ENCODE measurements at regions of chr7 and their contacts with region 1.

Region 1: GRCh38 chr7:47571331-47572093 is 10.4 kb downstream of the TNS3 start:
- DNase-seq: peak in 1 of 2 donors; percentile 91
- H3K4me3 ChIP-seq: peak overlapping the region; percentile 23 to 55
- H3K27ac ChIP-seq: peak overlapping the region; percentile 85 to 86
- H3K4me1 ChIP-seq: peaks cover 27 to 56% of the 10 kb centered on the region in 2 donors
- H3K27me3 ChIP-seq: no peaks in the 10 kb centered on the region
- CTCF ChIP-seq: no peak

Region 2: DNA sequence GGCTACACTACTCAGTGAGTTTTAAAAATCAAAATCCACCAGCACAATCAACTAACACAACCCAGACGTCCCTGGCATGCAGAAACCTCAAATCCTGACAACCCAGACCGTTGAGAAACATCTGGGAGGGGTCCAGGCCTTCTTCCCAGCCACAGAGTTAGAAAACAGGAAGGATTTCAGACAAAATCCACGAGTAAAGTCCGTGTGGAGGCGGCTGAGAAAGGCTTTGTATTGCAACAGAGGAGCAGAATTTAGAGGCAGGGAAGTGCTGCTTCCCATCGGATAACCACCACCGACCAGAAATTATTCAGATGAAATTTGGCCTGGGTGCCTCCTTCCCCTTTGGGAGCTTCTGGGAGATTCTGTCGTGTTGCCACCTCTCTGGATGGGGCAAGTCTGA is 51.1 kb before region 1 on chr7:
- intact Hi-C with region 1: loop called (anchors 5 kb)
- DNase-seq: peak in 1 of 2 donors; percentile 88
- H3K4me3 ChIP-seq: no peak overlapping the region
- H3K27ac ChIP-seq: peak overlapping the region; percentile 76 to 88
- H3K4me1 ChIP-seq: peaks cover 8 to 39% of the 10 kb centered on the region in 2 donors
- H3K27me3 ChIP-seq: no peaks in the 10 kb centered on the region
- CTCF ChIP-seq: no peak

Region 3: DNA sequence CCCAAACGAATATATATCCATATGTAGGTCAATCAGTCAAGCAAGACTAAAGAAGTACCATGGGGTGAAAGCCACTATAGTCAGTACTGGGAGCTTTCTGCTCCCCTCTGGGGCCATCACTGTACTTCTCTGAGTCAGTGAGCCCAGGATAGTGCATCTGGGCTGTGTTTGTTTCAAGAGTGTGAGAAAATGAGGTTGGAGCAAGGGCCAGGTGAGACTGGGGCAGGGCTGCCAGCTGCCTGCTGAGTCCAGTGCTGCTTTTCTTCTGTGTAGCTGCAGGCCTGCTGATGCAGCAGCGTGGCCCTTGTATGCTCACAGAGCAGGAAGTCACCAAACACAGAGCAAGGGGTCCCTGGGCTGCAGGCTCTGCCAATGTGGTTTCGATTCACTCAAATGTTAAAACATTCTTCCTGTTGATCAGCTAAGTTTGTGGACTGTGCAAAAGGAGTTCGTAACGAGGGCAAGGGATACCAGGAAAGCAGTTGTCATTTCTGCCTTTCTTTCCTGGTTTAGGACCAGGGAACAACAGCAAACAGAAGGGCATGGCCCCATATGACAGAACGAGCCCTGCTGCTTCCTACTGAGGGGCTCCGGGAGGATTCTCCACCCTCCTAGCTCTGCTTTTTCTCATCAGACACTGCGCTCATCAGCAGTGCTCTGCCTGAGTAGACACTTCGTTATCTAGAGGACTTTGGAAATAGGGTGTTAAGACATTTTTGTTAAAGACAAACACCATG is 75.8 kb after region 1 on chr7:
- intact Hi-C with region 1: no loop called
- DNase-seq: no peak
- H3K4me3 ChIP-seq: no peak overlapping the region
- H3K27ac ChIP-seq: no peak overlapping the region
- H3K4me1 ChIP-seq: peaks cover 5 to 12% of the 10 kb centered on the region in 2 donors
- H3K27me3 ChIP-seq: no peaks in the 10 kb centered on the region
- CTCF ChIP-seq: no peak

Region 4: DNA sequence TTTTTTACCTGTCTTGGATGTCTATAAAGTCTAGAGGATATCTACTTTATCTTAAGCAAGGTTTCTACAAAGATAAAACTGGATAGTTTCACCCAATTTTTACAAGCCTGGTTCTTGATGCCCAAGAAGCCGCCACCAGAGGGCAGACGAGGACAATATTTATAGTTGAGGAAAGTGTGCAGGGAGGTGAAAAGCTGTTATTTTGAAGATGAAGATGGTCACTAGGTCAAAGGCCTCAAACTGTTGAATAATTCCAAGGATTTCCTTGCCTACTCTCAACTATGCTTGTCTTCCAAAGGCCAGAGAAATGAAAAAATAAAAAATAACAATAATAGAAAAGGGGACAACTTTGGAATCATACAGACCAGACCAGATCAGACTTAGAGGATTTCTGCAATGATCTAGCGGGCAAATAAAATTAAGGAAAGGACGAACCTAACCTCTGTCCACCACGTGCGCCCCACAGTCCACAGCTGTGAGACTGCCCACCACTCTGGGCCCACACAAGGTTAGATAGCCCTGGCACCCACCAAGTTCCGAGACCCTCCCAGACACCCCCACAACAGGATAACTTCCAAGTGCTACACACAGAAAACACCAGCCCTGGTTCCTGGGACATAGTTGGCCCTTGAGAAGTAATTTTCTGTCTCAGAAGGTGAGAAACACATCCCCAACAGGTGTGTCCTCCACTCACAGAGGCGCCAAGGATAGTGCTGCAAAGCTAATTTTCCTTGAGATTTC is 373.9 kb after region 1 on chr7:
- intact Hi-C with region 1: loop called (anchors 10 kb)
- DNase-seq: peak in 1 of 2 donors; percentile 88
- H3K4me3 ChIP-seq: no peak overlapping the region
- H3K27ac ChIP-seq: no peak overlapping the region
- H3K4me1 ChIP-seq: peaks cover 7 to 12% of the 10 kb centered on the region in 2 donors
- H3K27me3 ChIP-seq: no peaks in the 10 kb centered on the region
- CTCF ChIP-seq: peak; percentile 51 to 84 (median 83)